Activated CD4-positive, alpha-beta T cell treated with anti-CD3 and anti-CD28 coated beads for 36 hours (primary cell): ENCODE measurements at regions of chr17 and their contacts with region 1.

Region 1: DNA sequence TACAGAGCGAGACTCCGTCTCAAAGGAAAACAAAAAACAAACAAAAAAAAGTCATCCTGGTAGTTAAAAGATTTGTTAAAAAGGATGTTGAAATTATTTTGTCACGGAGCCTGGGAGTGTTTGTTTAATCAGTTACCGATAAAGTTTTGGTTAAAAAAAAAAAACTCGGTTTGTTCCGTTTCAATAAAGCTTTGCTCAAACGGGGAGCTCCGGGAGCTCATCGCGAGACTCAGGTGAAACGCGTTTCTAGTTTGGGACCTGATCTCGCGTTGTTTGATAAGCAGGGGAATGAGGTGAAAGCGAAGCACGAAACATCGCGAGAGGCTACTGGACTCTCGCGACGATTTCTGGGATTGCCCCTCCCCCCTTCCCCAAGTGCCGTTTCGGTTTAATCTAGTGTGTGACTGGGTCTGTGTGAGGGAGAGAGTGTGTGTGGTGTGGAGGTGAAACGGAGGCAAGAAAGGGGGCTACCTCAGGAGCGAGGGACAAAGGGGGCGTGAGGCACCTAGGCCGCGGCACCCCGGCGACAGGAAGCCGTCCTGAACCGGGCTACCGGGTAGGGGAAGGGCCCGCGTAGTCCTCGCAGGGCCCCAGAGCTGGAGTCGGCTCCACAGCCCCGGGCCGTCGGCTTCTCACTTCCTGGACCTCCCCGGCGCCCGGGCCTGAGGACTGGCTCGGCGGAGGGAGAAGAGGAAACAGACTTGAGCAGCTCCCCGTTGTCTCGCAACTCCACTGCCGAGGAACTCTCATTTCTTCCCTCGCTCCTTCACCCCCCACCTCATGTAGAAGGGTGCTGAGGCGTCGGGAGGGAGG is at the start of gene CDK12:
- DNase-seq: peak; percentile 97
- ATAC-seq: peak; percentile 91
- H3K4me3 Mint-ChIP-seq: peak within 1 kb of the TSS; percentile 91
- H3K27ac Mint-ChIP-seq: peak within 1 kb of the TSS; percentile 94
- H3K4me1 Mint-ChIP-seq: peaks cover 22% of the 10 kb centered on the region
- H3K27me3 Mint-ChIP-seq: no peaks in the 10 kb centered on the region
- total RNA-seq, gene CDK12: 65.9 to 83.3 TPM

Region 2: GRCh38 chr17:39199820-39200069 is 261.6 kb before region 1 on chr17:
- CTCF ChIA-PET with region 1: no interaction called
- POLR2A ChIA-PET with region 1: no interaction called
- intact Hi-C with region 1: loop called (anchors 1 to 10 kb)
- DNase-seq: peak; percentile 95
- ATAC-seq: peak; percentile 69
- H3K4me3 Mint-ChIP-seq: peak overlapping the region; percentile 98
- H3K27ac Mint-ChIP-seq: peak overlapping the region; percentile 100
- H3K4me1 Mint-ChIP-seq: peaks cover 51% of the 10 kb centered on the region
- H3K27me3 Mint-ChIP-seq: no peaks in the 10 kb centered on the region

Region 3: GRCh38 chr17:39416141-39416540 is 45.2 kb before region 1 on chr17:
- CTCF ChIA-PET with region 1: no interaction called
- POLR2A ChIA-PET with region 1: no interaction called
- intact Hi-C with region 1: no loop called
- DNase-seq: no peak
- ATAC-seq: no peak
- H3K4me3 Mint-ChIP-seq: no peak overlapping the region
- H3K27ac Mint-ChIP-seq: no peak overlapping the region
- H3K4me1 Mint-ChIP-seq: no peaks in the 10 kb centered on the region
- H3K27me3 Mint-ChIP-seq: no peaks in the 10 kb centered on the region

Region 4: DNA sequence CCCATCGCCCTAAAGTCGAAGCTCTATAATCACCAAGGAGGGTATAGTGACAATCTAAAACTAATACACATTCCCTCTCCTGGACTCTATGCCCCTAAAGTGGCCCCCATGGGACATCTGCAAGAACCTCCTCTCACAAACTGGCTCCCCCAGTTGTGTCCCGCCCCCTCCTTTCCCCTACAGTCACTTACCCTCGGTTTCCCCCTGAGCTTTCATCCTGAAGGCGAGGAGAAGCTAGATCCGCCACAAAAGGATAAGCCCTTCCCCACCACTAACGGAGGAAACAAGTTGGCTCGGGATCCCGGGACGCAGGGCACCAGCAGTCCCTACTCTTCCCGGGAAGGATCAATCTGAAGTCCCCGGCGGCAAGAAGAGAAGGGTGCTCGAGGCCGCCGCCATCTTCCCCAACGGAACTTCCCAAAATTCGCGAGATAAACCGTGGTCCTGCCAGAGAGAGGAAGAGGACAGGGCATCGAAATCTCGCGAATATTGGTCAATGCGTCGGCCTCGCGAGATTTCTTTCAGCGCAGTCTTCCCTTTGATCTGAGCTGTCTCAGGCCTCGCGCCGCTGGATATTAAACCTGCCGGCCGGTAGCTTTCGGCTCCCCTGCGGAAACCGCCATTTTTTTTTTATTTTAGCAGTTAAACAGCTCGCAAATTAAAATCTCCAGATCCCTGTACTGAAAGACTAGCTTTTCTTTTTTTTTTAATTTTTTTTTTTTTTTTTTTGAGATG is 10.3 kb before region 1 on chr17 and contains the start of gene MED1:
- CTCF ChIA-PET with region 1: interaction called, 32 read pairs
- POLR2A ChIA-PET with region 1: interaction called, 96 read pairs
- intact Hi-C with region 1: loop called (anchors 1 kb)
- DNase-seq: peak; percentile 96
- ATAC-seq: peak; percentile 99
- H3K4me3 Mint-ChIP-seq: peak within 1 kb of the TSS; percentile 96
- H3K27ac Mint-ChIP-seq: peak within 1 kb of the TSS; percentile 96
- H3K4me1 Mint-ChIP-seq: peaks cover 30% of the 10 kb centered on the region
- H3K27me3 Mint-ChIP-seq: no peaks in the 10 kb centered on the region
- total RNA-seq, gene MED1: 66.1 to 76.1 TPM

Region 5: DNA sequence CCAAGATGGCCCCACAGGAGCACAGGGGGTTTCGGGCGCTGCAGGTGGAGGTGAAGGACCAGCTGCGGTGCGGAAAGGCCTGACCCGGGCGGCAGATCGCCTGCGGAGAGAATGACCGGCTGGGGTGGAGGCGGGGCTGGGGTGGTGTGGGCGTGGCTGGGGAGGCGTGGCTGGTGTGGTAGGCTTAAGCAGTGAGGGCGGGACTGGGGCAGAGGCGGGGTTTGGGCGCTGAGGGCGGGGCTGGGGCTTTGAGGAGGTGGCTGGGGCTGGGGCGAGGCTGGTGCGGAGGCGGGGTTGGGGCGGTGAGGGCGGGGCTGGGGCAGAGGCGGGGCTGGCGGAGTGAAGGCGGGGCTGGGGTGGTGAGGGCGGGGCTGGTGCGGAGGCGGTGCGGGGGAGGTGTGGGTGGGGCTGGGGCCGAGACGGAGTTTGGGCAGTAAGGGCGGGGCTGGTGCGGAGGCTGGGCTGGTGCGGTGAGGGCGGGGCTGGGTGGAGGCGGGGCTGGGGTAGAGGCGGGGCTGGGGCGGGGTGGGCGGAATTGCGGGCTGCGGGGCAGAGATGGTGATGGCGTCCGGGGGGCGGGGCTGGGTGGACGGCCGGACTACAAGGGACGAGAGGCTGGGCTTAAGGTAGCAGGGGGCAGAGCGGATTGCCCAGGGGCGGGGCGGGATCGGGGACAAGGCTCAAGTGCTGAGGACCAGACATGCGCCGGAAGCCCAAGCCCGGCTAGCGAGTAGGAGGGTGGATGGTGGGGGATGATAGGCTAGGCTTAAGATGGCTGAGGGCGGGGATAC is 491.6 kb after region 1 on chr17:
- CTCF ChIA-PET with region 1: no interaction called
- POLR2A ChIA-PET with region 1: no interaction called
- intact Hi-C with region 1: loop called in 1 of 2 experiments (anchors 1 kb)
- DNase-seq: peak; percentile 98
- ATAC-seq: peak; percentile 87
- H3K4me3 Mint-ChIP-seq: peak overlapping the region; percentile 73
- H3K27ac Mint-ChIP-seq: peak overlapping the region; percentile 69
- H3K4me1 Mint-ChIP-seq: peaks cover 12% of the 10 kb centered on the region
- H3K27me3 Mint-ChIP-seq: no peaks in the 10 kb centered on the region

Region 6: GRCh38 chr17:40124279-40125141 is 663.2 kb after region 1 on chr17:
- CTCF ChIA-PET with region 1: no interaction called
- POLR2A ChIA-PET with region 1: no interaction called
- intact Hi-C with region 1: no loop called
- DNase-seq: peak; percentile 14
- ATAC-seq: no peak
- H3K4me3 Mint-ChIP-seq: peak overlapping the region; percentile 90
- H3K27ac Mint-ChIP-seq: peak overlapping the region; percentile 80
- H3K4me1 Mint-ChIP-seq: peaks cover 26% of the 10 kb centered on the region
- H3K27me3 Mint-ChIP-seq: no peaks in the 10 kb centered on the region